ENCODE measurements at regions of chr12 and their contacts with region 1.

Region 1: DNA sequence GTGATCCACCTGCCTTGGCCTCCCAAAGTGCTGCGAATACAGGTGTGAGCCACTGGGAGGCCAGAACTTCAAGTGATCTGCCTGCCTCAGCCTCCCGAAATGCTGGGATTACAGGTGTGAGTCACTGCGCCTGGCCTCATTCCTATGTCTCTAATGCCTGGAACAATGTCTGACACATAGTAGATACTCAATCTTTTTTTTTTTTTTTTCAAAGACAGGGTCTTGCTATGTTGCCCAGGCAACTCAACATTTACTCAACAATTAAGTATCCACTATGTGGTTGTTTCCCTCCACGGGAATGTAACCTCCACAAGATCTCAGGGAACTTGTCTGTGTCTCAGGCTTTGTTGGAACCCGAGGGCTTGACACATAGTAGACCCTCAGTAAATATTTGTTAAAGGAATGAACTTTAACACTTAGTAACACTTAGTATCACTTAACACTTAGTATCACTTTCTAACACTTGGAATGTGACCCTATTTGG is 3.0 kb upstream of the TMEM120B start:
- DNase-seq: no peak
- H3K4me3 ChIP-seq: no peak overlapping the region
- H3K27ac ChIP-seq: no peak overlapping the region
- H3K4me1 ChIP-seq: peaks cover 7 to 41% (median 24%) of the 10 kb centered on the region in 6 donors
- H3K27me3 ChIP-seq: no peaks in the 10 kb centered on the region
- CTCF ChIP-seq: no peak
- POLR2A ChIP-seq: no peak

Region 2: DNA sequence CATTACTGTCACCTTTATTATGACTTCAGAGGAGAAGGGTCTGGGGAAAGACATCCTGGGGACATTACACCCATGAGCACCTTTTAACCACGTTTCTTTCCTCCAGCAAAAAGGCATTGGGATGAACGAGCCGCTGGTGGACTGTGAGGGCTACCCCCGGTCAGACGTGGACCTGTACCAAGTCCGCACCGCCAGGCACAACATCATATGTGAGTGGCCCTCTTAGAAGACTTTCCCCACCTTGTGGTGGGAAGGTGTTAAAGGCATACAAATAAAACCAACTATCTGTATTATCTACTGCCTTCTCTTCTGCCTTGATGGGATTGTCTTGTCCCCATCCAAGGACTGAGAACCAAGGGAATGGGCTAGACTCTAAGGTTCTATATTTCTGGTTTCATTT is 185.1 kb after region 1 on chr12:
- intact Hi-C with region 1: loop called (anchors 10 kb)
- DNase-seq: no peak
- H3K4me3 ChIP-seq: no peak overlapping the region
- H3K27ac ChIP-seq: no peak overlapping the region
- H3K4me1 ChIP-seq: peaks cover 11 to 45% (median 22%) of the 10 kb centered on the region in 6 donors
- H3K27me3 ChIP-seq: no peaks in the 10 kb centered on the region
- CTCF ChIP-seq: no peak
- POLR2A ChIP-seq: no peak

Measured in spleen (tissue), 13 donors.